Activated CD8-positive, alpha-beta T cell treated with anti-CD3 and anti-CD28 coated beads, Interleukin-2, amount 10 ng/mL, durations not matched to agents 7 days and 5 days (primary cell): ENCODE measurements at regions of chr9 and their contacts with region 1.

Region 1: DNA sequence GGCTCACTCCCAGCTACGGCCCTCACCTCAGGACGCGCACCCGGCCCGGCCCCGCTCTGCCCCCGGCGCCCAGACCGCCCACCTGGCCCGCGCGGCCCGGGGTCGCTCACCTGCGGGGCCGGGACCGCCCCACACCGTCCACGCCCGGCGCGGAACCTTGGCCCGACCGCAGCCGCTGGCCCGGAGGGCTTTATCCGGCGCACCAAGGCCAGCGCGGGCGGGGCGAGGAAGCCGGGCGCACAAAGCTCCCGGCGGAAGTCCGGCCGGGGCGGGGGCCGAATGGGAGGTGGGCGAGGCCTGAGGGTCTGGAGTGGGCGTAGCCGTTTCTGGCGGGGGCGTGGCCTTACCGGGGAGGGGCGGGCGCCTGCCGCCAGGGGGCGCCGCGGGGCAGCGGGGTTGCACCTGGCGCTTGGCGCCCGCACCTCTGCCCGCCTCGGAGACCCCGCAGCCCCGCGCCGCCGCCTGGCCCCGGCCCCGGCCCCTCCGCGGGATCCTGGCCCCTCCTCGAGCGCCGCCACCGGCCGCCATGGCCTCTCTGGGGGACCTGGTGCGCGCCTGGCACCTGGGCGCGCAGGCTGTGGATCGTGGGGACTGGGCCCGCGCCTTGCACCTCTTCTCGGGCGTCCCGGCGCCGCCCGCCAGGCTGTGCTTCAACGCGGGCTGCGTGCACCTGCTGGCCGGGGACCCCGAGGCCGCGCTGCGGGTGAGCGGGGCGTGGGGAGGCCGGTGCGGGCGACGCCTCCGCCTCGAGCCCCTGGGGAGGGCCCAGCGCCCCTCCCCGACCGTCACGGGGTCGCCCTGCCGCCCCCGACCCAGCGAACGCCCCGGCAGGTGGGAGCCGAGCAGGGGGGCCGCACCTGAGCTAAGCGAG is at the starts of genes EXD3 and NOXA1:
- DNase-seq: peak; percentile 96
- ATAC-seq: peak; percentile 93
- H3K4me3 Mint-ChIP-seq: peak within 1 kb of the TSS; percentile 87
- H3K27ac Mint-ChIP-seq: peak within 1 kb of the TSS; percentile 63
- H3K4me1 Mint-ChIP-seq: peaks cover 13% of the 10 kb centered on the region
- H3K27me3 Mint-ChIP-seq: peaks cover 10% of the 10 kb centered on the region
- total RNA-seq, gene EXD3: 10.0 to 10.9 TPM
- total RNA-seq, gene NOXA1: 0.52 to 0.58 TPM

Region 2: GRCh38 chr9:137302176-137302994 is 120.9 kb before region 1 on chr9 and contains the start of gene NRARP:
- CTCF ChIA-PET with region 1: interaction called, 12 read pairs
- POLR2A ChIA-PET with region 1: no interaction called
- DNase-seq: peak; percentile 92
- ATAC-seq: peak; percentile 78
- H3K4me3 Mint-ChIP-seq: peak within 1 kb of the TSS; percentile 64
- H3K27ac Mint-ChIP-seq: no peak within 1 kb of the TSS
- H3K4me1 Mint-ChIP-seq: peaks cover 31% of the 10 kb centered on the region
- H3K27me3 Mint-ChIP-seq: peaks cover 24% of the 10 kb centered on the region
- total RNA-seq, gene NRARP: 1.4 to 1.5 TPM

Region 3: GRCh38 chr9:137445275-137445807 is 22.1 kb after region 1 on chr9:
- CTCF ChIA-PET with region 1: interaction called, 14 read pairs
- POLR2A ChIA-PET with region 1: interaction called, 3 read pairs
- DNase-seq: peak; percentile 89
- ATAC-seq: peak; percentile 86
- H3K4me3 Mint-ChIP-seq: no peak overlapping the region
- H3K27ac Mint-ChIP-seq: no peak overlapping the region
- H3K4me1 Mint-ChIP-seq: peaks cover 25% of the 10 kb centered on the region
- H3K27me3 Mint-ChIP-seq: peaks cover 15% of the 10 kb centered on the region